MCF 10A (cell line): ENCODE measurements at regions of chr19 and their contacts with region 1.

Region 1: DNA sequence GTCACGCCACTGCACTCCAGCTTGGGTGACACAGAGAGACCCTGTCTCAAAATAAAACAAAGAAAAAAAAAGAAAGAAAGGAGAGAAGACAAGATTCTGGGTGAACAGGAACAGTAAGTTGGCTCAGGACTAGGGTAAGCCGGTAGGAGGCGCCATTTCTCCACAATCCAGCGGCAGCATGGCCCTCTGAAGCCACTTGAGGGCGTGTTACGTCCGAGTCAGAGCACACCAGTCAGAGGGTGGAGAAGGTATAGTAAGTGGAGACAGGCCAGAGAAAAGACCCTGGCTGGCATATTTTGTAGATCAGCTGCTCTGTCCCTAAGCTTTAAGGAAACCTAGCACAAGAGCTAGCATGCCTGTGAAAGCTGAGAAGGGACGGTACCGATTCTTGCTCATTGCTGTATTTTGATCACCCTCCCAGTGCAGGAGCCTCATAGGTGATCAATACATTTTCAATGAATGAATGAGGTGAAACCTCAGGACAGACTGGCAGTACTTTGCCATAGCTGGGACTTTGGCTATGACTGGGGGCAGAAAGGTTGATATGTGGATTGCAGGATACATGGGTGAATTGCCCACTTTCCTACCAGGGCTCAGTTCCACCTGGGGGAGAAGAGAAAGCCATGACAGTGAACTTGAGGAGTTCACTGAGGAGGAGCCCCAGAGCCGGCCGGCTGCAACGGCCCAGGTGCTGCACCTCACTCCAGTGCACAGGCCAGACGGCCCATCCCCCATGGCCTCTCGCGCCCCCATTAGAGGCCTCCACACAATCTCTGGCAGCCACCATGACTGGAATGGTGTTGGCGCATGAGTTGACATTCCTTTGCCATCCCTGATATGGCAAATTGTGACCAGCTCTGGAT is 23.5 kb downstream of the POU2F2 start:
- DNase-seq: peak; percentile 90
- H3K4me3 Mint-ChIP-seq: no peak overlapping the region
- H3K27ac Mint-ChIP-seq: no peak overlapping the region
- H3K4me1 Mint-ChIP-seq: peaks cover 26% of the 10 kb centered on the region
- H3K27me3 Mint-ChIP-seq: peaks cover 20% of the 10 kb centered on the region
- CTCF ChIP-seq: peak; percentile 99

Region 2: DNA sequence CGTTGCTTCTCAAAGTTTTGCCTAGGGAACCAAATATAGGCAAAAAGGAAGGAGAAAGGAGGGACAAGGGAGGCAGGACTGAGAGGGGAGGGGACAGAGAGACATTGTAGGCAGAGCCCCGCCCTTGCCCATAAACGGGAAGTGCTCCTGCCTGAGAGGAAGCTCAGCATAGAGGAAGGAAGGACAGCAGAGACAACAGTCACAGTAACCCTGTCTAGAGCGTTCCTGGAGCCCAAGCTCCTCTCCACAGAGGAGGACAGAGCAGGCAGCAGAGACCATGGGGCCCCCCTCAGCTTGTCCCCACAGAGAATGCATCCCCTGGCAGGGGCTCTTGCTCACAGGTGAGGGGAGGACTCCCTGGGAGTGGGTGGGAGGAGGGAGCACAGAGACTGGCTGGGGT is 532.8 kb before region 1 on chr19 and contains the start of gene CEACAM21:
- CTCF ChIA-PET with region 1: no interaction called
- POLR2A ChIA-PET with region 1: no interaction called
- intact Hi-C with region 1: no loop called
- DNase-seq: no peak
- H3K4me3 Mint-ChIP-seq: no peak within 1 kb of the TSS
- H3K27ac Mint-ChIP-seq: no peak within 1 kb of the TSS
- H3K4me1 Mint-ChIP-seq: no peaks in the 10 kb centered on the region
- H3K27me3 Mint-ChIP-seq: peaks cover 78% of the 10 kb centered on the region
- CTCF ChIP-seq: no peak
- total RNA-seq, gene CEACAM21: not detected in 2 replicates

Region 3: DNA sequence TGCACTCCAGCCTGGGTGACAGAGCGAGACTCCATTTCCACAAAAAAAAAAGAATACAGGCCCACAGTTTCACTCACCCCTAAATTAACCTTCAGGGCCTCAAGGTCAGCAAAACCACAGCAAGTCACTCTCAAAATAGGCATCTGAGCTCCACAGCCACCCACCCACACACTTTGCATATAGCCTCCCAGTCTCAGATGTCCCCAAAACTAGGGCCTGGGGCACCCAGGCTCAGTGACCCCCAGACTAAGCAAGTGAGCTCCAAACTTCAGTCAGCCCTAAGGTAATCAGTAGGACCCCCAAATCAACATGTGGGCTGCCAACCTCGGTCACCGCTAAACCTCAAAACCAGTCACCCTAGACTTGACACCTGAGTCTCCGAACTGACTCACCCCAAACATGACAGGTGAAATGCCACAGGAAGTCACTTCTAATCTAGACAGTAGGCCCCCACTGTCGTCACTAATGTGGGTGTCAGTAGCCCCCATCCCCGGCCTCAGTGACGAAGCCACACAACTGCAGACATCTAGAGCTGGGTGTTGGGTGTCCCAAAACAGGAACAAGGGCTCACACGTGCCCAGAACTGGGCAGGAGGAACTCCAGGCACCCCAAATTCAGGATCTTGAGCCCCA is 163.5 kb before region 1 on chr19:
- CTCF ChIA-PET with region 1: no interaction called
- POLR2A ChIA-PET with region 1: no interaction called
- intact Hi-C with region 1: no loop called
- DNase-seq: no peak
- H3K4me3 Mint-ChIP-seq: no peak overlapping the region
- H3K27ac Mint-ChIP-seq: no peak overlapping the region
- H3K4me1 Mint-ChIP-seq: no peaks in the 10 kb centered on the region
- H3K27me3 Mint-ChIP-seq: peaks cover 8% of the 10 kb centered on the region
- CTCF ChIP-seq: no peak

Region 4: DNA sequence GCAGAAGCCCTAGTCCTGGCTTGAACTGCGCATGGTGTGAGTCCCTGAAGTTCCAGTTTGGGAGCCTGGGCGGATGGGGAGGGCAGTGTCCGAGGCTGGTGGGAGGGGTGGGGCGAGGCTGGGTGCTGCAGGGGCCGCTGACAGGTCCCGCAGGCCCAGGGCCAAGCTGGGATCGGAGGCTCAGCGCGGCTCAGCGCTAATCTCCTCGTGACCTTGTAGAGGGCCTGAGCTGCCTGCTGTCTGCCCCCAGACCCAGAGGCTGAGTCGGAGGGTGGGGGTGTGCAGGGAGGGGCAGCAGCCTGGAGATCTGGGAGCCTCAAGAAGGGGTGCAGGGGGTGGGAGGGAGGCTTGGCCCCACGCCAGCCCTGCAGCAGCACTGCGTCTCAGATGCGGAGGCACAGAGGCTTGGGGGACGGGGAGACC is 117.7 kb before region 1 on chr19:
- CTCF ChIA-PET with region 1: no interaction called
- POLR2A ChIA-PET with region 1: no interaction called
- intact Hi-C with region 1: no loop called
- DNase-seq: no peak
- H3K4me3 Mint-ChIP-seq: no peak overlapping the region
- H3K27ac Mint-ChIP-seq: no peak overlapping the region
- H3K4me1 Mint-ChIP-seq: no peaks in the 10 kb centered on the region
- H3K27me3 Mint-ChIP-seq: peaks cover 36% of the 10 kb centered on the region
- CTCF ChIP-seq: no peak

Region 5: GRCh38 chr19:42095814-42096230 is 12.9 kb before region 1 on chr19:
- CTCF ChIA-PET with region 1: interaction called, 35 read pairs
- POLR2A ChIA-PET with region 1: interaction called, 3 read pairs
- intact Hi-C with region 1: no loop called
- DNase-seq: no peak
- H3K4me3 Mint-ChIP-seq: no peak overlapping the region
- H3K27ac Mint-ChIP-seq: no peak overlapping the region
- H3K4me1 Mint-ChIP-seq: peaks cover 12% of the 10 kb centered on the region
- H3K27me3 Mint-ChIP-seq: no peaks in the 10 kb centered on the region
- CTCF ChIP-seq: no peak

Region 6: GRCh38 chr19:42140125-42140754 is 31.5 kb after region 1 on chr19:
- CTCF ChIA-PET with region 1: interaction called, 15 read pairs
- POLR2A ChIA-PET with region 1: no interaction called
- intact Hi-C with region 1: no loop called
- DNase-seq: peak; percentile 51
- H3K4me3 Mint-ChIP-seq: no peak overlapping the region
- H3K27ac Mint-ChIP-seq: no peak overlapping the region
- H3K4me1 Mint-ChIP-seq: no peaks in the 10 kb centered on the region
- H3K27me3 Mint-ChIP-seq: peaks cover 23% of the 10 kb centered on the region
- CTCF ChIP-seq: no peak

Region 7: DNA sequence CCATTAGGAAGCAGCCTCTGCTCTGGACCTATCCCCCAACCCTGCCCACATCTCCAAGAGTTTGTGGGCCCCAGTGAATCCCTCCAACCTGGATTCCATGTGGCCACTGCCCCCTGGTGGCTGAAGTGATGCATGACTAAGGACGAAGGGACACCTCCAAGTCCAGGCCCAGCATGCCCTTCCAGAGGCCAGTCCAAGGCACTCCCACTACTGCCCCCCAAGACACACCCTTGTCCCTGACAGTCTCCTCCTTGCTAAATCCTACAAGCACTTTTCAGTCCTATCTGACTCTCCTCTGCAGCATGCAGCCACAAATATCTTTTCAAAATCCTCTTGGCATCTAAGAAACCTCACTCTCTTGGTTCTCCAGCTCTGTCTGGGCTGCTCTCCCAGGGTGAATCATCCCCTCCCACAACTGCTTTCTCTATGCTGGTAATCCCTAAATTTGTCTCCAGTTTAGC is 75.7 kb after region 1 on chr19:
- CTCF ChIA-PET with region 1: interaction called, 42 read pairs
- POLR2A ChIA-PET with region 1: no interaction called
- intact Hi-C with region 1: loop called (anchors 1 kb)
- DNase-seq: peak; percentile 87
- H3K4me3 Mint-ChIP-seq: no peak overlapping the region
- H3K27ac Mint-ChIP-seq: no peak overlapping the region
- H3K4me1 Mint-ChIP-seq: peaks cover 14% of the 10 kb centered on the region
- H3K27me3 Mint-ChIP-seq: peaks cover 12% of the 10 kb centered on the region
- CTCF ChIP-seq: peak; percentile 89

Region 8: GRCh38 chr19:42325273-42325895 is 216.6 kb after region 1 on chr19 and contains the start of gene MEGF8:
- CTCF ChIA-PET with region 1: interaction called, 6 read pairs
- POLR2A ChIA-PET with region 1: no interaction called
- intact Hi-C with region 1: loop called (anchors 10 kb)
- DNase-seq: peak; percentile 99
- H3K4me3 Mint-ChIP-seq: peak within 1 kb of the TSS; percentile 87
- H3K27ac Mint-ChIP-seq: peak within 1 kb of the TSS; percentile 73
- H3K4me1 Mint-ChIP-seq: peaks cover 14% of the 10 kb centered on the region
- H3K27me3 Mint-ChIP-seq: no peaks in the 10 kb centered on the region
- CTCF ChIP-seq: peak; percentile 76
- total RNA-seq, gene MEGF8: 13.0 and 20.6 TPM in 2 replicates

Region 9: DNA sequence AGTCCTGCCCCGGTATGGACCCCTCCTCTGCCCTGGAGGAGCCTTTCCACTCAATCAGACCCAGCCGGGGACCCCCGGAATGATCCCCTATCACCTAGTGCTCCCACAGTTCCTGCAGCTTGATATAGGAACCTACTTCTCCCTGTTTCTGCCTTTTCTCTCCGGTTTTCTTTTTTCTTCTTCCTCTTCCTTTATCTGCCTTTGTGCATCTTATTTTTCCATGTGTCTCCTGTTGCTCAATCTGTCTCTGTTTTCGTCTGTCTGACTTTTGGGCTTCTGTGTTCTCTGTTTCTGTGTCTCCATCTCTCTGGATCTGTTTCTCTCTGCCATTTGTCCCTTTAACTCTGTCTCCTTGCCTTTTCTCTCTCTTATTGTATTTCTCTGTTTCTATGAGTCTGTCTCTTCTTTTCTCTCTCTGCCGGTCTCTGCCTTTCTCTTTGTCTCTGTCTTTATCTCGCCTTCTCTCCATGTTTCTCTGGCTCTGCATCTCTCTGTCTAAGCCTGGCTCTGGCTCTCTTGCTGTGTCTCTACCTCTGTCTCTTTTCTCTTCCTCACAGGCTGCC is 226.7 kb after region 1 on chr19:
- CTCF ChIA-PET with region 1: no interaction called
- POLR2A ChIA-PET with region 1: no interaction called
- intact Hi-C with region 1: no loop called
- DNase-seq: no peak
- H3K4me3 Mint-ChIP-seq: no peak overlapping the region
- H3K27ac Mint-ChIP-seq: no peak overlapping the region
- H3K4me1 Mint-ChIP-seq: no peaks in the 10 kb centered on the region
- H3K27me3 Mint-ChIP-seq: no peaks in the 10 kb centered on the region
- CTCF ChIP-seq: no peak

Region 10: DNA sequence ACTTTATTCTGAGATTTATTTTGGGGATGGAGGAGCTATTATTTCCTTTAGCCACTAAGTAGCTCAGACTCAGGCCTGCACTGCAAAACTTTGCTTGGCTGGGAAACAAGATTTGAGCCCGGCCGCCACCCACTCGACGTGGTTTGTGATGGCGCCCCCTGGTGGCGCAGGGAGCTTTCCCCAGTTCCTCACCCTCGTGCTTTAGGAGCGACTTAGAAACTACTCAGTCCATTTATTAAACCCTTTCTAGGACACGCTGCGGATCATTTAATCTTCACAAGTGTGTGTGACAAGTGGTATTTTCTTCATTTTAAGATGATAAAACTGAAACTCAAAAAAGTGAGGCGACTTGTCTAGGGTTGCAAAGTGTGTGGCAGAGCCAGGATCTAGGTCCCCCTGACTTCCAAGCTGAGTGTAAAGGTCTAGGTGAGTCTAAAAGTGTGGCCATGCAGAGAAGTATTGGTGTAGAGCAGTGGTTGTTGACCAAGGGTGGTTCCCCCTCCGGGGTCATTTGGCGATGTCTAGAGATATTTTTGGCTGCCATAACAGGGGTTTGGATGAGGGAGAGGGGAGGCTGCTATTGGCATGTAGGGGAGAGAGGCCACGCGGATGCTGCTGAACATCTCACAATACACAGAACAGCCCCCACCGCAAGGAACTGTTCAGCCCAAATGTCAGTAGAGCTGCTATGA is 331.7 kb after region 1 on chr19:
- CTCF ChIA-PET with region 1: interaction called, 5 read pairs
- POLR2A ChIA-PET with region 1: no interaction called
- intact Hi-C with region 1: loop called (anchors 1 kb)
- DNase-seq: peak; percentile 78
- H3K4me3 Mint-ChIP-seq: no peak overlapping the region
- H3K27ac Mint-ChIP-seq: no peak overlapping the region
- H3K4me1 Mint-ChIP-seq: peaks cover 6% of the 10 kb centered on the region
- H3K27me3 Mint-ChIP-seq: peaks cover 12% of the 10 kb centered on the region
- CTCF ChIP-seq: peak; percentile 87